ENCODE measurements at regions of chr1 and their contacts with region 1.

Region 1: GRCh38 chr1:6401673-6402072 is 8.1 kb upstream of the ACOT7 start:
- DNase-seq: peak in 1 of 2 experiments; percentile 65
- H3K4me3 ChIP-seq: no peak overlapping the region
- H3K27ac ChIP-seq: no peak overlapping the region
- H3K4me1 ChIP-seq: peaks cover 8% of the 10 kb centered on the region; the same call in 1 of the 2 replicates
- H3K27me3 ChIP-seq: no peaks in the 10 kb centered on the region
- CTCF ChIP-seq: no peak

Region 2: DNA sequence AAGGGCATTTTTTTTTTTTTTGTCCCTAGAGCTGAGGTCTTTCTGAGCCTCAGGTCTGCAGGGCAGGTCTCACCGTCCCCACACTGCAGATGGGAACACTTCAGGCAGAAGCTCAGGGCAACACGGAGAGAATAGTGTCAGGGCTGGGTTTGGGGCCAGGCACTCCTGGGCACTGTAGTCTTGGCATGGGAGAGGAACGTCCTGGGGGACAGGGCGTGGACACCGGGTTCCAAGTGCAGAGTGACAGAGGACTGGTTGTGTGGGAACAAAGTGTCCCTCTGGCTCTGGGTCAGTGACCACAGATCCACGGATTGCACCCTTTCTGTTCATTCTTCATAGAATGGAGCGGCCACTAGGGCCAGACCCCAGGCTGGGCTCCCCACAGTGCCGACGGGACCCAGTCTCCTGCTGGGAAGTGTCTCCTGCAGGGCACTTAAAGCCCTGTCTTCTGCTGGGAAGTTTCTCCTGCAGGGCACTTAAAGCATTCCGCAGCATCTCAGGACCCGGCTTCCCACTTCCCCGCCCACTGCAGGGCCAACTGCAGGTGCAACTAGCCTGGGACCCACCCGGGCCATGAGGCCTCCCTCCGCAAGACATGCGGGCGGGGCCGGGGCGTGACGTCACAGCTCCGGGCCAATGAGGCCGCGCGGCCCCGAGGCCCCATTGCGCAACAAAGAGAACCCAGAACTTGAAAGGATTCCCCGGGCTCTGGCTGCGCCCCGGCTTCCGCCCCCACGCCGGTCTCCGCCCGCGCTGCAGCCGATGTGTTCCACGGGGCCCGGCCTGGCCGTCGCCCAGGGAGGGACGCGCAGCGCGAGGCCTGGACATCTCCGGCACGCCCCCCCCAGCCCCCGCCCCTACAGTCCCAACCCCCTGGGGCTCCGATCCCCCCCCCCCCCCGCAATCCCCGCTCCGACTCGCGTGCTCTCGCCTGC is 141.9 kb before region 1 on chr1:
- CTCF ChIA-PET with region 1: no interaction called
- POLR2A ChIA-PET with region 1: no interaction called
- intact Hi-C with region 1: loop called (anchors 5 kb)
- DNase-seq: peak; percentile 55 to 79
- H3K4me3 ChIP-seq: peak overlapping the region; percentile 54; the same call in 1 of the 2 replicates
- H3K27ac ChIP-seq: no peak overlapping the region
- H3K4me1 ChIP-seq: no peaks in the 10 kb centered on the region
- H3K27me3 ChIP-seq: no peaks in the 10 kb centered on the region
- CTCF ChIP-seq: no peak

Region 3: GRCh38 chr1:6273380-6273891 is 128.2 kb before region 1 on chr1:
- CTCF ChIA-PET with region 1: no interaction called
- POLR2A ChIA-PET with region 1: no interaction called
- intact Hi-C with region 1: no loop called
- DNase-seq: no peak
- H3K4me3 ChIP-seq: no peak overlapping the region
- H3K27ac ChIP-seq: no peak overlapping the region
- H3K4me1 ChIP-seq: no peaks in the 10 kb centered on the region
- H3K27me3 ChIP-seq: no peaks in the 10 kb centered on the region
- CTCF ChIP-seq: no peak

Region 4: GRCh38 chr1:6350416-6351088 is 51.1 kb before region 1 on chr1:
- CTCF ChIA-PET with region 1: no interaction called
- POLR2A ChIA-PET with region 1: interaction called, 16 read pairs
- intact Hi-C with region 1: loop called (anchors 1 kb)
- DNase-seq: peak; percentile 64 to 81
- H3K4me3 ChIP-seq: no peak overlapping the region
- H3K27ac ChIP-seq: no peak overlapping the region
- H3K4me1 ChIP-seq: peaks cover 9% of the 10 kb centered on the region; the same call in 1 of the 2 replicates
- H3K27me3 ChIP-seq: no peaks in the 10 kb centered on the region
- CTCF ChIP-seq: no peak

Region 5: DNA sequence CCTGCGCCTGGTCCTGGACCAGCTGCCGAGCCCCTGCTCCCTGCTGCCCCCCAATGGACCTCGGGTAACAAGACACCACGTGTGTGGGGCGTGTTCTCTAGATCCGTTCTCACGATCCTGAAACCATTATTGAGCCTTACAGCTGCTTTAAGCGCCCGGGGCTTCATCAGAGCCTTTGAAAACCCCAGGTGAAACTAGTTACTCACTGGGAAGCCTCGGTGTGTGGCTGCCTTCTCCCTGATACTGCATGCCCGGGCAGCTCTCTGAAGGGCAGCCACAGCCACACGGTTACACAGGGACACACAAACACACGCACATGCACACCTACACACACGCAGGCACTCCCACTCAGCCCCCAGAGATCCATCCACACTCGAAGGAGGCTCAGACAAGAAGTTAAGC is 12.8 kb after region 1 on chr1:
- CTCF ChIA-PET with region 1: no interaction called
- POLR2A ChIA-PET with region 1: no interaction called
- intact Hi-C with region 1: no loop called
- DNase-seq: peak; percentile 55 to 82
- H3K4me3 ChIP-seq: no peak overlapping the region
- H3K27ac ChIP-seq: peak overlapping the region; percentile 84
- H3K4me1 ChIP-seq: peaks cover 36% of the 10 kb centered on the region
- H3K27me3 ChIP-seq: no peaks in the 10 kb centered on the region
- CTCF ChIP-seq: peak; percentile 6; the same call in 1 of the 2 replicates

Region 6: DNA sequence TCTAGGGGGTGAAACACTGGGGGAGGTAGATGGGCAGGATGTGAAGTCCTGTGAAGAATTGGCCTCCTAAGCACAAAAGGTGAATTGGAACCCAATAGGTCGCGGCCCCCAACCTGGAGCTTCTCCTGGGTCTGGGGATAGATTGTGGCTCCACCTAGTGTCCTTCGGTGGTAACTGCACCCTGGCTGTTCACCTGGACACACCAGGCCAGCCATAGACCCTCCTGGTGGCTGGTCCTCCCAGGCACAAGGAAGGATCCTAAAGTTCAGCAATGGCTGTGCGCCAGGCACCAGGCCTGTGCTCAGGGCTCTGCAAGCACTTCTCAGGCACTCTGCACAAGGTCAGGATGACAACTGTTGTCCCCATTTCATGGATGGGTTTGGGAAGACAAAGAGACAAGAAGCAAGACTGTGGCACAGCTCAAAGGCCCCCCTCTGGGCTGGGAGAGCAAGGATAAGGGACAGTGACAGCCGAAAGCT is 36.4 kb after region 1 on chr1:
- CTCF ChIA-PET with region 1: interaction called, 3 read pairs
- POLR2A ChIA-PET with region 1: no interaction called
- intact Hi-C with region 1: loop called (anchors 2 kb)
- DNase-seq: peak; percentile 52 to 76
- H3K4me3 ChIP-seq: no peak overlapping the region
- H3K27ac ChIP-seq: no peak overlapping the region
- H3K4me1 ChIP-seq: no peaks in the 10 kb centered on the region
- H3K27me3 ChIP-seq: no peaks in the 10 kb centered on the region
- CTCF ChIP-seq: peak; percentile 89

Region 7: DNA sequence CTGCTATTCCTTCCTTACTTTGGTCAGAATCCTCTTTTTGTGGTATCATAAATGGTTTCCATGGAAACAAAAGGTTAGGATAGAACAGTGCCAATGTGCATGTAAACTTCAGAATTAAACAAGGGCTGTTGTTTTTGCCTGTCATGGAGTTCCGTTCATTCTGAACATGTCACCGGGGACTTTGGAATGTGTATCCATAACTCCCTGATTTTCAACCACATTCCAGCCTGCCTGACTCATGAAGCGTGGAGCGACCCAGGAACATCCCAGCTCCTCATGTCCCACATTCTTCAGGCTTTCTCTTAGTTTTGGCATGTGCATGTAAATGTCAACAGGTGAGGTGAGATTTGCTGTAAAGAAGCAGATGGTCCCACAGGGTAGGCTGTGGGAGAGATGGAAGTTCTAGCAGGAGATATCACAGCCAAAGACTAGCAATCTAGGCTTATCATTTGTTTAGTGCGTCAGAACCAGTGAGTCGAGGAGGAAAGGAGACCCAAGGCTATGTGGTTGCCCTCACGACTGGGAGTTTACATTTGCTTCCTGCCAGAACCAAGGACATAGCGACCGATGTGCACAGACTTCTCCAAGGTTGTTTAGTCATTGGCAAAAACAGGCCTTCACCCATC is 323.0 kb after region 1 on chr1:
- CTCF ChIA-PET with region 1: no interaction called
- POLR2A ChIA-PET with region 1: no interaction called
- intact Hi-C with region 1: no loop called
- DNase-seq: peak in 1 of 2 experiments; percentile 12
- H3K4me3 ChIP-seq: no peak overlapping the region
- H3K27ac ChIP-seq: no peak overlapping the region
- H3K4me1 ChIP-seq: no peaks in the 10 kb centered on the region
- H3K27me3 ChIP-seq: no peaks in the 10 kb centered on the region; the same call in 1 of the 2 replicates
- CTCF ChIP-seq: no peak